B cell (primary cell): ENCODE measurements at regions of chr6 and their contacts with region 1.

Region 1: GRCh38 chr6:148846778-148847761 is 100.2 kb downstream of the UST start:
- DNase-seq: no peak
- ATAC-seq: no peak
- H3K4me3 ChIP-seq: no peak overlapping the region
- H3K4me3 Mint-ChIP-seq: no peak overlapping the region
- H3K27ac ChIP-seq: no peak overlapping the region
- H3K27ac Mint-ChIP-seq: peak overlapping the region; percentile 59
- H3K4me1 ChIP-seq: peaks cover 11 to 32% of the 10 kb centered on the region in 2 donors
- H3K4me1 Mint-ChIP-seq: peaks cover 35% of the 10 kb centered on the region
- H3K27me3 ChIP-seq: no peaks in the 10 kb centered on the region
- H3K27me3 Mint-ChIP-seq: no peaks in the 10 kb centered on the region
- CTCF ChIP-seq: no peak

Region 2: DNA sequence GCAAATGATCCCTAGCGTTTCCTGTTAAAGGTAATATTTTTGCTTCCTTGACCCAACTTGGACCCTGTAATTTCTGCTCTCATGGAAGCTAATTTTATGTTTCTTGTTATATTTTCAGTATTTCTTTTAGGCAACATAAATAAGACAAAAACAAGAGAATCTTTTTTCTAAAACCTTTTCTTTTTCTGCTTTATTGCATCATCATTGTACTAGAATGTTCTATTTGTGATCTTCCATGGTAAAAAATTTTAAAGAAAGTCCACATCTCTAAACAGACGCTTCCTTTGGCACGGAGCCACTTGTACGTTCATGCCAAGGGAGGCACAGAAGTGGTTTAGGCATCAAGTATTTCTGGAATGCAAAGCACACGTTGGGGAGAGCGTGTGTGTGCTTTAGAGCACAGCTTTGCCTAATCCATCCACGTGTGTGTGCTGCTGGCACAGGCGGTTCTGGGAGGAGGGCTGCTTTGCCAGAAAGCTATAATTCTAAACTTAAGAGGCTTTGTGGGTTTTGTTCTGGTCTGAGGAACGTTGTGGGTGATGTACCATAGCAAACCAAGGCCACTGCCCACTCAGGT is 406.1 kb before region 1 on chr6:
- CTCF ChIA-PET with region 1: no interaction called
- POLR2A ChIA-PET with region 1: no interaction called
- intact Hi-C with region 1: no loop called
- DNase-seq: no peak
- ATAC-seq: no peak
- H3K4me3 ChIP-seq: no peak overlapping the region
- H3K4me3 Mint-ChIP-seq: no peak overlapping the region
- H3K27ac ChIP-seq: no peak overlapping the region
- H3K27ac Mint-ChIP-seq: no peak overlapping the region
- H3K4me1 ChIP-seq: no peaks in the 10 kb centered on the region
- H3K4me1 Mint-ChIP-seq: no peaks in the 10 kb centered on the region
- H3K27me3 ChIP-seq: peaks cover 0 to 8% (median 0%) of the 10 kb centered on the region in 4 experiments
- H3K27me3 Mint-ChIP-seq: peaks cover 17% of the 10 kb centered on the region
- CTCF ChIP-seq: no peak

Region 3: DNA sequence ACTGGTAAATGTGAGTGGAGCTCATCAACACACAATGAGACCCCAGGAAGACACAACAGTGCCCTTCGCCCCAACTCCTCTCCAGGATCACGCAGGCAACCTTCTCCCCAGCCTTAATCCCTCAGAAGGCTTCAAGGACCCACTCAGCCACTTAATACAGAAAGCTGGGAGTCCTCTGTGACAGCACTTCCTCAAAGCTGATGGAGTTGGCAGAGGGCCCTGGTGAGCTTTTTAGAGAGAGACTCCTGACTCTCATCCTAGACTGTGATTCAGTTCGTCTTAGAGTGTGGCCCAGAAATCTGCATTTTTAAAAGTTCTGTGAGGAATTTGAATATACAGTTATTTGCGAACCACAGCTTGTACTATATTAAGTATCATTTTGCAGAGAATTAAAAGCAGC is 87.5 kb after region 1 on chr6:
- CTCF ChIA-PET with region 1: no interaction called
- POLR2A ChIA-PET with region 1: interaction called, 12 read pairs
- intact Hi-C with region 1: no loop called
- DNase-seq: no peak
- ATAC-seq: no peak
- H3K4me3 ChIP-seq: no peak overlapping the region
- H3K4me3 Mint-ChIP-seq: no peak overlapping the region
- H3K27ac ChIP-seq: no peak overlapping the region
- H3K27ac Mint-ChIP-seq: no peak overlapping the region
- H3K4me1 ChIP-seq: peaks cover 8 to 9% of the 10 kb centered on the region in 2 donors
- H3K4me1 Mint-ChIP-seq: peaks cover 33% of the 10 kb centered on the region
- H3K27me3 ChIP-seq: no peaks in the 10 kb centered on the region
- H3K27me3 Mint-ChIP-seq: no peaks in the 10 kb centered on the region
- CTCF ChIP-seq: no peak